Vagina (tissue), 2 donors: ENCODE measurements at regions of chr9 and their contacts with region 1.

Region 1: DNA sequence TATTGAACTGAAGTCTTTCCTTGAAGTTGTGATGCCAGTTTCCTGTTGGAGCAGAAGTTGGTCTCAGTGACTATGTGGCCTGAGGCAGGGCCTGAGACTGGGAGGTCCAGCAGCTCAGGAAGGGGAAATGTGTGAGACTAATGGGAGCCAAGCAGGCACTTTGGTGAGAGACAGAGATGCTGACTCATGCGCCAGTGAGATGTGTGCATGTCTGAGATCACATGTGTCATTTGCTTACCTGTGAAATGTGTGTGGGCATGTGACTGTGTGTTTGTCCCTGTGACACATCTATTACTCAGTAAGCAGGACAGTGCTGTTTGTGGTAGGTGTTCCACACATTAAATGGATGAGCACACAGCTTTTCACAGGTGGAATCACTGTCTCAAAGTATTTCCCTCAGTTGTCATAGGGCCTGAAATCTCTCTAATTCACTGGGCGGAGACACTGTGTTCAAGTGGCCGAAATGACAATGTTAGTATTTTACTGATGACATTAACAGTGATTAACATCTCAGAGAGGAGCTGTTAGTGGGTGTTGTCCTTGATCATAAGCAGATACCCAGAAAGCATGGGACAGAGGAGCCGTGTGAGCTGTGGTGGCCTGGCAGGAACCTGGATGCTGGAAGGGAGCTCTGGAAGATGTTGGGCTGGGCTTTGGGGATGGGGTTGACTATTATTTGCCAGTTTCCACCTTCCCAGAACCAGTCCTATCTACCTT is 7.4 kb downstream of the NPR2 start:
- DNase-seq: no peak
- H3K4me3 ChIP-seq: no peak overlapping the region
- H3K27ac ChIP-seq: no peak overlapping the region
- H3K4me1 ChIP-seq: peaks cover 31% of the 10 kb centered on the region
- H3K27me3 ChIP-seq: no peaks in the 10 kb centered on the region
- CTCF ChIP-seq: no peak
- POLR2A ChIP-seq: no peak

Region 2: GRCh38 chr9:35844716-35845270 is 46.0 kb after region 1 on chr9:
- intact Hi-C with region 1: loop called (anchors 5 kb)
- DNase-seq: no peak
- H3K4me3 ChIP-seq: no peak overlapping the region
- H3K27ac ChIP-seq: peak overlapping the region; percentile 45
- H3K4me1 ChIP-seq: peaks cover 30% of the 10 kb centered on the region
- H3K27me3 ChIP-seq: no peaks in the 10 kb centered on the region
- CTCF ChIP-seq: no peak
- POLR2A ChIP-seq: no peak